ENCODE measurements at regions of chr11 and their contacts with region 1.

Region 1: GRCh38 chr11:118956094-118956846 is at the start of gene UPK2:
- DNase-seq: peak; percentile 68
- H3K4me3 ChIP-seq: no peak within 1 kb of the TSS
- H3K27ac ChIP-seq: no peak within 1 kb of the TSS
- H3K4me1 ChIP-seq: no peaks in the 10 kb centered on the region
- H3K27me3 ChIP-seq: peaks cover 3 to 5% of the 10 kb centered on the region in 2 experiments
- CTCF ChIP-seq: peak; percentile 88 to 97
- POLR2A ChIP-seq: no peak
- total RNA-seq, gene UPK2: not detected in 2 replicates

Region 2: GRCh38 chr11:118659314-118659952 is 296.8 kb before region 1 on chr11:
- CTCF ChIA-PET with region 1: interaction called, 8 read pairs
- POLR2A ChIA-PET with region 1: no interaction called
- dilution Hi-C with region 1: no loop called
- intact Hi-C with region 1: loop called (anchors 1 kb)
- DNase-seq: peak; percentile 86
- H3K4me3 ChIP-seq: no peak overlapping the region
- H3K27ac ChIP-seq: peak overlapping the region; percentile 18
- H3K4me1 ChIP-seq: peaks cover 6% of the 10 kb centered on the region
- H3K27me3 ChIP-seq: peaks cover 0 to 2% of the 10 kb centered on the region in 2 experiments
- CTCF ChIP-seq: peak; percentile 97 to 98
- POLR2A ChIP-seq: peak; percentile 65

Region 3: DNA sequence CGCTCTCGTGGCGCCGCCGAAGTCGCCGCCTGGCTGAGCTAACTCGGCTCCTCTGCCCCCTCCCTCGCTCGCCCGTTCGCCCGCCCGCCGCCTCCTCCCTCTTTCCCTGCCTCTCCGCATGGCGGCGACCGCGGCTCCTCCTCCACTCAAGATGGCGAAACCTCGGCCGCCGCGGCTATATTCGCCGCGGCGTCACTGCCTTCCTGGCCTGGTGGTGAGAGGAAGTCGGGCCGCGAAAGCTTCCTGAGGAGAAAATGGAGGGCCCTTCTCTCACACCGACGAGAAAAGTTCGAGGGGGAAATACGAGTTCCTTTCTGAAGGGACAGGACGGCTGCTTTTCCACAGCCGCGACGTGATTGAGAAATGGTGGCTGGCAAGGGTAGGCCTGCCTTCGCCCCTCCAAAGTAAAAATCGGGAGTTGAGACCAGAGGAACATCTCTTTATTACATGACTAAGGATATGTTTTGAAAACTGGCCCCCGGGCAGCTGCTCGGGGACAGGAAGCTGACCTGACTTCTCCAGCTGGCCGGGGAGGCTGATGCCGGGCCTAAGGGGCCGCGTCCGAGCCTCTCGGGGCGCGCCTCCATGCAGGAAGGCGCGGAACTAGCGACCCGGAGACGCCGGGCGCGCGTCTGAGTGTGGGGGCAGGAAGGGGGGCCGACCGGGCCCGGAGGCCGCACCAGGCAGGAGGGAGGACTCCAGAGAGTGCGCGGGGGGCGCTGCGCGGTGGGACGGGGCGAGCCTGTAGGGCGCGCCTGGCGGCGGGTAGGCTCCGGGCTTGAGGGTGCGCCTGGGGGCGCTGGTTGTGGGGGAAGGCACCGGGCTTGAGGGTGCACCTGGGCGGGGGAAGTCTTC is 164.9 kb before region 1 on chr11 and contains the start of gene DDX6:
- CTCF ChIA-PET with region 1: interaction called, 11 read pairs
- POLR2A ChIA-PET with region 1: no interaction called
- dilution Hi-C with region 1: no loop called
- intact Hi-C with region 1: loop called (anchors 1 kb)
- DNase-seq: peak; percentile 86
- H3K4me3 ChIP-seq: peak within 1 kb of the TSS; percentile 70 to 87 (median 84)
- H3K27ac ChIP-seq: peak within 1 kb of the TSS; percentile 89
- H3K4me1 ChIP-seq: peaks cover 21% of the 10 kb centered on the region
- H3K27me3 ChIP-seq: no peaks in the 10 kb centered on the region
- CTCF ChIP-seq: peak; percentile 7 to 38
- POLR2A ChIP-seq: no peak
- total RNA-seq, gene DDX6: 132 and 138 TPM in 2 replicates

Region 4: GRCh38 chr11:118907051-118908042 is 48.9 kb before region 1 on chr11:
- CTCF ChIA-PET with region 1: interaction called, 15 read pairs
- POLR2A ChIA-PET with region 1: no interaction called
- dilution Hi-C with region 1: no loop called
- intact Hi-C with region 1: loop called (anchors 1 kb)
- DNase-seq: peak; percentile 82
- H3K4me3 ChIP-seq: no peak overlapping the region
- H3K27ac ChIP-seq: no peak overlapping the region
- H3K4me1 ChIP-seq: peaks cover 30% of the 10 kb centered on the region
- H3K27me3 ChIP-seq: no peaks in the 10 kb centered on the region
- CTCF ChIP-seq: peak; percentile 84 to 88
- POLR2A ChIP-seq: no peak

Region 5: DNA sequence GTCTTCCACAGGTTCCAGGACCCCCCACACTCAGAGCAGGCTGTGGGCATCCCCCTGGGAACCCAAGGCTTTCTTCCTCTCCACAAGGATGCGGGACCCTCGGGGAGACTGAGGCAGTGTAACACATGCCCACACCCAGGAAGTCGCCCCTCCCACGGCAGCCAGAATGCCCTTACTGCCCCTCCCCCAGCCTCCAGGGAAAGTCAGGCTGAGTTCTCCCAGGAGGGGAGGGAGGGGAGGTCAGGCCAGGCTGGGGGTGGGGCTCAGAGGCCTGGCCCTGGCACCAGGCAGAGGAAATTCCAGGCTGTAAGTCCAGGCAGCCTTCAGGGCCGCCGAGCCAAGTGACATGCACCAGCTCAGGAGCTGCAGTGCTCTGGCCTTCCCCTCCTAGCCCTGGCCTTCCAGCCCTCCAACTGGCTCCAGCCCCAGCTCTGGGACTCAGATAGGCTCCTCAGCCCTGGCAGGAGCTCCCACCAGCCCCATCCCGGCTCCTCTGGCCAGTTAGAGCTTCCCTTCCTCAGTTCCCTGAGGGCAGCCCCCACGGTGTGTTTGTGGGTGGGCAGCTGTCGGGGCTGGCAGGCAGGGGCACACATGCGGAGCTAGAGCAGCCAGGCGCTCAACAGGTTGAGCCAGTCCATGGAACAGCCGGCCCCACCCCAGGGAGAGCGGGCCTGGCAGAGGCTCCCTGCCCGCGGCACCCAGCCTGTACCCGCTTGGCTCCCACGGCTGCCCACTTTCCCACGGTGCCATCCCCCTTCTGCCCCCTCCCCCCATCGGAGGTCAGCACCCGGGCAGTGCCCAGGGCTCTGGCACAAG is 34.1 kb before region 1 on chr11:
- CTCF ChIA-PET with region 1: interaction called, 3 read pairs
- POLR2A ChIA-PET with region 1: no interaction called
- dilution Hi-C with region 1: no loop called
- intact Hi-C with region 1: loop called (anchors 1 kb)
- DNase-seq: peak; percentile 40
- H3K4me3 ChIP-seq: peak overlapping the region in 2 of 3 experiments; percentile 6 to 10
- H3K27ac ChIP-seq: peak overlapping the region; percentile 80
- H3K4me1 ChIP-seq: peaks cover 66% of the 10 kb centered on the region
- H3K27me3 ChIP-seq: no peaks in the 10 kb centered on the region
- CTCF ChIP-seq: no peak
- POLR2A ChIP-seq: no peak

Region 6: GRCh38 chr11:118928108-118928870 is 28.0 kb before region 1 on chr11:
- CTCF ChIA-PET with region 1: interaction called, 4 read pairs
- POLR2A ChIA-PET with region 1: no interaction called
- dilution Hi-C with region 1: no loop called
- intact Hi-C with region 1: loop called (anchors 1 kb)
- DNase-seq: peak; percentile 91
- H3K4me3 ChIP-seq: peak overlapping the region; percentile 34 to 77 (median 64)
- H3K27ac ChIP-seq: peak overlapping the region; percentile 27
- H3K4me1 ChIP-seq: peaks cover 21% of the 10 kb centered on the region
- H3K27me3 ChIP-seq: peaks cover 0 to 2% of the 10 kb centered on the region in 2 experiments
- CTCF ChIP-seq: peak; percentile 89 to 92
- POLR2A ChIP-seq: no peak

Region 7: GRCh38 chr11:119044708-119045107 is 88.4 kb after region 1 on chr11:
- CTCF ChIA-PET with region 1: no interaction called
- POLR2A ChIA-PET with region 1: no interaction called
- dilution Hi-C with region 1: no loop called
- intact Hi-C with region 1: no loop called
- DNase-seq: no peak
- H3K4me3 ChIP-seq: no peak overlapping the region
- H3K27ac ChIP-seq: no peak overlapping the region
- H3K4me1 ChIP-seq: no peaks in the 10 kb centered on the region
- H3K27me3 ChIP-seq: peaks cover 0 to 1% of the 10 kb centered on the region in 2 experiments
- CTCF ChIP-seq: peak in 1 of 2 donors; percentile 25
- POLR2A ChIP-seq: no peak

Region 8: GRCh38 chr11:119057000-119057769 is 100.9 kb after region 1 on chr11 and contains the start of gene HYOU1:
- CTCF ChIA-PET with region 1: no interaction called
- POLR2A ChIA-PET with region 1: no interaction called
- dilution Hi-C with region 1: no loop called
- intact Hi-C with region 1: no loop called
- DNase-seq: peak; percentile 96
- H3K4me3 ChIP-seq: peak within 1 kb of the TSS; percentile 72 to 86 (median 80)
- H3K27ac ChIP-seq: peak within 1 kb of the TSS; percentile 54
- H3K4me1 ChIP-seq: peaks cover 11% of the 10 kb centered on the region
- H3K27me3 ChIP-seq: no peaks in the 10 kb centered on the region
- CTCF ChIP-seq: peak in 1 of 2 donors; percentile 35
- POLR2A ChIP-seq: peak; percentile 84
- total RNA-seq, gene HYOU1: 286 and 302 TPM in 2 replicates

Measured in endothelial cell of umbilical vein (primary cell).